AG04449 (cell line): ENCODE measurements at regions of chr6 and their contacts with region 1.

Region 1: GRCh38 chr6:169789982-169790927 is 38.8 kb downstream of the ERMARD start:
- DNase-seq: no peak
- H3K4me3 ChIP-seq: peak overlapping the region; percentile 70
- CTCF ChIP-seq: peak; percentile 99

Region 2: GRCh38 chr6:169692516-169692915 is 97.7 kb before region 1 on chr6:
- CTCF ChIA-PET with region 1: no interaction called
- POLR2A ChIA-PET with region 1: no interaction called
- DNase-seq: no peak
- H3K4me3 ChIP-seq: no peak overlapping the region
- CTCF ChIP-seq: no peak

Region 3: DNA sequence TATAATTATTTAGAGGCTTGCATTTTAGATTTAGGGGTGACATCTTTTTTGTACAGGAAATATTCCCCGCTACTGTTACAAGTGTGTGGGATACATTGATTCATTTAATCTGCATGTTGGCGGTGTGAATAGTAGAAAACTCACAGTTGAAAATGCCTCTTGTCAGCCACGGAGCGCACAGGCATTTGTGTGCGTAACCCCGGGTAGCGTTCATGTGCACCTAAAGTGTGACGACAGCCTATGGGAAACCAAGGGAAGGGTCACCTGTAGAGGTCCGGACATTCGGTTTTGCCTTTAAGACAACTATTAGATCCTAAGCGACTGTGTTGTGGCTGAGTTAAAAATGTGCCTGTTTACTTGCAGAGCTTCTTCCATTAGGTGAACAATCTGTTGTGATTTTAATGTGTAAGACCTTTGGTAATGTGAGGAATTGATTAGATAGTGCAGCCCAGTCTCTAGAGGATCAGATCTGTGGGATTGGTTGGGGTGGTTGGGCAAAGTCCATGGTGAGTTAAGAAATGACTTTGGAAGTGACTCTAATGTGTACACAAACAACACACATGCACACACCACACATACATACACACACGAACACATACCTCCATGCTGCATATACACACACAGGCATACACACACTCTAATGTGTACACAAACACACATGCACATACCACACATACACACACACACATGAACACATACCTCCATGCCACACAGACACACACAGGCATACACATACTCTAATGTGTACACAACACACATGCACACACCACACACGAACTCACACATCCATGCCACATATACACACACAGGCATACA is 23.1 kb before region 1 on chr6:
- CTCF ChIA-PET with region 1: interaction called, 22 read pairs
- POLR2A ChIA-PET with region 1: no interaction called
- DNase-seq: no peak
- H3K4me3 ChIP-seq: no peak overlapping the region
- CTCF ChIP-seq: no peak

Region 4: DNA sequence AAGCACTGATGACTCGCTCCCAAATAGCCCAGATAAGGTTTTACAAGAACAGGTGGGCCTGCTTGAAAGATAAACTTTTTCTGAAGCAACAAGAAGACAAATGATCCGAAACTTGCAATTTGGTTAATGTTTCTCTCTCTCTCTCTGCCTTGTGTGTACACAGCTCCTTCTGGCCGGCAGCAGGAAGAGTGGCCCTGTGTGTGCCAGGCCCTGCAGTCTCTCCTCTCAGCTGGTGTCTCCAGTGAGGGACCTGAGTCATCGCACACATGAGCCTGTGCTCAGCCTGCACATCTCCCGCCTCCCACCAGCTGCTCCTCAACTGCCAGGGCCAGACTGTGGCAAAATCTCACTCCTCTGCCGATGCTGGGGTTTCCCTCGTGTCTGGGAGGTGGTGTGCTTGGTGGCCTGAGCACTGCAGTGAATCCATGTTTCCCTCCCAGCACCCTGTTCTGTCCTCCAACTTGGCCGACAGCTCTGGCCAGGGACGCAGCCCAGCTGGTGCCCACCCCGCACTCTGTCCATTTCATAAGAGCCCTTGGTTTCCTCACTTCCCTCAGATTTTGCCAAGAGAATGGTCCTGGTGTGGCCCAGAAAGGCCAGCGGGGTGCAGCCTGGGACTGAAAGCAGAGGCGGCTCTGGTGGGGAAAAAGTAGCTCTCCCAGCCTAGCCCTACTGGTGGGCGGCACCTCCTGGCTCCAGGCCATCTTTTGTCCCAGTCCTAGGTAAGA is 10.6 kb after region 1 on chr6:
- CTCF ChIA-PET with region 1: interaction called, 39 read pairs
- POLR2A ChIA-PET with region 1: interaction called, 4 read pairs
- DNase-seq: no peak
- H3K4me3 ChIP-seq: no peak overlapping the region
- CTCF ChIP-seq: no peak

Region 5: DNA sequence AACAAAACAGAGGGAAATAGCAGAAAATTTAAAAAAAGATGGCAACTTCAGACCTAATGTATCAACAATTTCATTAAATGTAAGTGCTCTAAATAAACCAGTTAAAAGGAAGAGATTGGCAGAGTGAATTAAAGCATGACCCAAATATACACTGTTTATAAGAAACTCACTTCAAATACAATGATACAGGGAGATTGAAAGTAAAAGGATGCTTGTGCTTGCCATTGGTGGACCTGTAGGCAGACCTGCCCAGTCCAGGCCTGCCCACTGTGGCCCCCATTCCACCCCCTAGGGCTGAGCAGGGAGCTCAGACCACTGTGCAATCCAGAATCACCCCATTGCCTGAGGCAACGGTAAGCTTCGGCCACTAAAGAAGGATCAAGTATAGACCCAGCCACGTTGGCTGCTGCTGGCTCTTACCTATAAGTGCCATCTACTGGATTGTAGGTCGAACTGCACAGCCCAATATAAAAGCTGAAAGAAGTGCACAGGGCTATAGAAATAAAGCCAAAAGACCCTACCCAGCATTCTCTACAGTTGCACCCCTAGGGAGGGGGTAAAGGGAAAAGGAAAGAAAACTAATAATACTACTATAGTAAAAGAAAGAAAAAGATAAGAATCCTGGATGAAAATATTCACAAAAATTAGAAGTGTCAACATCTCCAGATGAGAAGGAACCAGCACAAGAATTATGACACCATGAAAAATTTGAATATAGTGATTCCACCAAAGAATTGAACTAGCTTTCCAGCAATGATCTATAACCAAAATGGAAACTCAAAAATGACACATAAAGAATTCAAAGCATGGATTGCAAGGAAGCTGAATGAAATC is 726.7 kb after region 1 on chr6:
- CTCF ChIA-PET with region 1: interaction called, 52 read pairs
- POLR2A ChIA-PET with region 1: no interaction called
- DNase-seq: peak; percentile 31
- H3K4me3 ChIP-seq: no peak overlapping the region
- CTCF ChIP-seq: peak; percentile 73

Region 6: DNA sequence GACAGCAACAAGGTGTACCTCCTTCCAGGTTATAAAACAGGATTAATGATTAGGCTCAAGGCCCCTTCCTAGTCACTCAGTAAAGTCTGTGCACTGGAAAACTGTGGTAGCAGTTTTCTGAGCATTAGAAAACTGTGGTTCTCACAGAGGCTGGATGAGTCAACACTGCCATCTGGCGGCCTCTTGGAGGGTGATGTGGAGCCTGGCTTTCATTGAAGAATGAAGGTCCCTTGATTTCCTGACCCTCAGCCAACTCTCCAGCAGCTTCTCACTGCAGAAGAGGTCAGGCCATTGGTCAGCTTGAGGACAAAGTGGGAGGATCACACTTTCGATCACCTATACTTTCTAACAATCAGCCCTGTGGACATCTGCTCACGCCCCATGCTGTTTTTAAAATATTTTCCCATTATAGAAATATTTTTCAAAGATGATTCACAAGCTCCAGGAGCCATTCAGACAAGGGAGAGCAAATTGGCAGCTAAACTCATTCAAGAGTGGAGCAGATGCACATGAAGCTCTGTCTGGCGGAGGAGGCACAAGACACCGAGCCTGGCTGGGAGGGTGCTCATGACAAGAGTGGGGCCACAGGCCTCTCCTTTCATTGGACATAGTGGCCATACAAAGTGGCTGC is 739.7 kb after region 1 on chr6:
- CTCF ChIA-PET with region 1: interaction called, 156 read pairs
- POLR2A ChIA-PET with region 1: interaction called, 3 read pairs
- DNase-seq: no peak
- H3K4me3 ChIP-seq: no peak overlapping the region
- CTCF ChIP-seq: peak; percentile 87